Mammary epithelial cell (primary cell): ENCODE measurements at regions of chr3 and their contacts with region 1.

Region 1: GRCh38 chr3:189340672-189341460 is 169.1 kb downstream of the TPRG1 start:
- DNase-seq: no peak
- H3K4me3 ChIP-seq: no peak overlapping the region
- H3K27ac ChIP-seq: no peak overlapping the region
- H3K4me1 ChIP-seq: peaks cover 7% of the 10 kb centered on the region
- H3K27me3 ChIP-seq: no peaks in the 10 kb centered on the region
- CTCF ChIP-seq: peak; percentile 27 to 37

Region 2: DNA sequence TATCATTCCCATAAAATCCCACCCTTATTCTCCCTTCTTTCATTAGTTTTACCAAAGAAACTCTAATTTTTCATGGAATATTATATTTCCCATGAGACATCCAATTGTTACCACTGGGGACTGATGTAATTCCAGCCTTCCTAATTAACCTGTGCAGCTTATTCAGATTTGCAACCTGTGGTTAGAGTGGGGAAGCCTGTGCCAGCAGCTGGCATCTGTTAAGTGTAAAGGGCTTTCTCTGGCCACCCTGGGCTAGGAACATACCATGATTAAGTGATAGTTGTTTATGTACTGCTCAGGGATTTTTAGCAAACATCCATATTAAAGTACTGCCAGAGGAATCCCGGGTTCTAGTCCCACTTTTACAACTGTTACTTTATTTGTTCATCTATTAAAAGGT is 90.9 kb before region 1 on chr3:
- CTCF ChIA-PET with region 1: no interaction called
- dilution Hi-C with region 1: no loop called
- in situ Hi-C with region 1: no loop called
- intact Hi-C with region 1: no loop called
- DNase-seq: no peak
- H3K4me3 ChIP-seq: no peak overlapping the region
- H3K27ac ChIP-seq: no peak overlapping the region
- H3K4me1 ChIP-seq: no peaks in the 10 kb centered on the region
- H3K27me3 ChIP-seq: no peaks in the 10 kb centered on the region
- CTCF ChIP-seq: no peak

Region 3: GRCh38 chr3:189292667-189293478 is 48.0 kb before region 1 on chr3:
- CTCF ChIA-PET with region 1: no interaction called
- dilution Hi-C with region 1: loop called (anchors 5 kb)
- in situ Hi-C with region 1: no loop called
- intact Hi-C with region 1: no loop called
- DNase-seq: peak; percentile 41
- H3K4me3 ChIP-seq: no peak overlapping the region
- H3K27ac ChIP-seq: peak overlapping the region; percentile 72
- H3K4me1 ChIP-seq: peaks cover 29% of the 10 kb centered on the region
- H3K27me3 ChIP-seq: no peaks in the 10 kb centered on the region
- CTCF ChIP-seq: no peak